ENCODE measurements at regions of chr4 and their contacts with region 1.

Region 1: DNA sequence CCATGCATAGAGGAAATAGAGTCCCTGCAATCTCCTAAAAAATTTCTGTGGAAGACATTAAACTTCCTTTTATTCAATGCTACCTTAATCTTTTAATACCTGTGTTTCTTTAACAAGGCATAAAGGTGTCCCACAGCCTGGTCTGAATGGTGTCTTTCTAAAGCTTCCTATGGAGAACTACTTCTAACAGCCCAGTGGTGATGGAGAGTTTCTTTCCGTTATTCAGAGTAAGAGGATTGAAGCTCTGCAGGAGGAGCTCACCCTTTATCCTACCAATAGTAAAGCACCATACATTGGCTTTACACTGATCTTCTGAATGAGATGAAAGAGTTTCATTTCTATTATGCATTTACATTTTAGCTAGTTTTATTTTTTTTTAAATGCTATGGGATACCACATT is 1362.4 kb upstream of the ADGRL3 start:
- DNase-seq: no peak
- ATAC-seq: no peak
- H3K4me3 ChIP-seq: no peak overlapping the region
- H3K4me3 Mint-ChIP-seq: no peak overlapping the region
- H3K27ac ChIP-seq: no peak overlapping the region
- H3K27ac Mint-ChIP-seq: no peak overlapping the region
- H3K4me1 ChIP-seq: no peaks in the 10 kb centered on the region
- H3K4me1 Mint-ChIP-seq: no peaks in the 10 kb centered on the region
- H3K27me3 ChIP-seq: no peaks in the 10 kb centered on the region
- H3K27me3 Mint-ChIP-seq: no peaks in the 10 kb centered on the region
- CTCF ChIP-seq: no peak

Region 2: GRCh38 chr4:59484944-59485343 is 352.8 kb before region 1 on chr4:
- CTCF ChIA-PET with region 1: no interaction called
- POLR2A ChIA-PET with region 1: no interaction called
- intact Hi-C with region 1: no loop called
- DNase-seq: no peak
- ATAC-seq: no peak
- H3K4me3 ChIP-seq: no peak overlapping the region
- H3K4me3 Mint-ChIP-seq: no peak overlapping the region
- H3K27ac ChIP-seq: no peak overlapping the region
- H3K27ac Mint-ChIP-seq: no peak overlapping the region
- H3K4me1 ChIP-seq: no peaks in the 10 kb centered on the region
- H3K4me1 Mint-ChIP-seq: no peaks in the 10 kb centered on the region
- H3K27me3 ChIP-seq: no peaks in the 10 kb centered on the region
- H3K27me3 Mint-ChIP-seq: no peaks in the 10 kb centered on the region
- CTCF ChIP-seq: no peak

Region 3: DNA sequence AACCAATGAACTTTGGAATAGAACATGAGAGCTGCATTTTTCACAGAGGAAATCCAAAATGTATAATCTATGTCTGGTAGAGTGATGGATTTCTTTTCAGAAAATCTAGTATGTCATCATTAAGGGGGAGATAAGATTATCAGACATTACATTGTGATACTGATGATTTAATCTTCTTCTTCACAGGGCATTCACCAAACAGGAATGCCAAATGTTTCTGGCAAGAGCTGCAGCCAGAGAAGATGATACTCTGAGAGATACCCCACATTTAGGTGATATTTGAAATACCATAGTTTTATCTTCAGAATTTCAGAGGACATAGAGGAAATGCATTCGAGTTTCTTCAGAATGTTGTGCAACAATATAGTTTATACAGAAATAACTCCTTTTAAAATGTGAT is 161.4 kb before region 1 on chr4:
- CTCF ChIA-PET with region 1: no interaction called
- POLR2A ChIA-PET with region 1: no interaction called
- intact Hi-C with region 1: no loop called
- DNase-seq: no peak
- ATAC-seq: no peak
- H3K4me3 ChIP-seq: no peak overlapping the region
- H3K4me3 Mint-ChIP-seq: no peak overlapping the region
- H3K27ac ChIP-seq: no peak overlapping the region
- H3K27ac Mint-ChIP-seq: no peak overlapping the region
- H3K4me1 ChIP-seq: no peaks in the 10 kb centered on the region
- H3K4me1 Mint-ChIP-seq: no peaks in the 10 kb centered on the region
- H3K27me3 ChIP-seq: no peaks in the 10 kb centered on the region
- H3K27me3 Mint-ChIP-seq: no peaks in the 10 kb centered on the region
- CTCF ChIP-seq: no peak

Region 4: DNA sequence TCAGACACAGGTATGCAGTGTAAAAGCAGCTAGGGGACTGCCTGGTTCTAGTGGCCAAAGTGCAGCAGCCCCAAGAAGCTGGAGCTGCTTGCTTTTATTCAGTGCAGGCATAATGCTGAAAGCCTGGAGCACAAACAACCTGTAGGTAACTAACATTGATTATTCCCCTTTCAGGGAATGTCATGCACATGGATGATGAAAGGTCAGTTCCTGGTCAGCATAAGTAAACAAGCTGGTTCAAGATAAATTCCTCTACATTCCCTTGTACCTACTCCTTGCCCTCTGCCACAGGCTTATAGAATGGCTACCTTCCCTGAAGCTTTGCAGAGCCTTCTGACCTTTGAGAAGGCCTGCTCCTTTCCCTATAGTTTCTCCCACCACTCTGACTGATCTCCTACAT is 43.9 kb after region 1 on chr4:
- CTCF ChIA-PET with region 1: no interaction called
- POLR2A ChIA-PET with region 1: no interaction called
- intact Hi-C with region 1: loop called in 1 of 2 experiments (anchors 5 kb)
- DNase-seq: no peak
- ATAC-seq: no peak
- H3K4me3 ChIP-seq: no peak overlapping the region
- H3K4me3 Mint-ChIP-seq: no peak overlapping the region
- H3K27ac ChIP-seq: no peak overlapping the region
- H3K27ac Mint-ChIP-seq: no peak overlapping the region
- H3K4me1 ChIP-seq: no peaks in the 10 kb centered on the region
- H3K4me1 Mint-ChIP-seq: no peaks in the 10 kb centered on the region
- H3K27me3 ChIP-seq: no peaks in the 10 kb centered on the region
- H3K27me3 Mint-ChIP-seq: no peaks in the 10 kb centered on the region
- CTCF ChIP-seq: no peak

Region 5: DNA sequence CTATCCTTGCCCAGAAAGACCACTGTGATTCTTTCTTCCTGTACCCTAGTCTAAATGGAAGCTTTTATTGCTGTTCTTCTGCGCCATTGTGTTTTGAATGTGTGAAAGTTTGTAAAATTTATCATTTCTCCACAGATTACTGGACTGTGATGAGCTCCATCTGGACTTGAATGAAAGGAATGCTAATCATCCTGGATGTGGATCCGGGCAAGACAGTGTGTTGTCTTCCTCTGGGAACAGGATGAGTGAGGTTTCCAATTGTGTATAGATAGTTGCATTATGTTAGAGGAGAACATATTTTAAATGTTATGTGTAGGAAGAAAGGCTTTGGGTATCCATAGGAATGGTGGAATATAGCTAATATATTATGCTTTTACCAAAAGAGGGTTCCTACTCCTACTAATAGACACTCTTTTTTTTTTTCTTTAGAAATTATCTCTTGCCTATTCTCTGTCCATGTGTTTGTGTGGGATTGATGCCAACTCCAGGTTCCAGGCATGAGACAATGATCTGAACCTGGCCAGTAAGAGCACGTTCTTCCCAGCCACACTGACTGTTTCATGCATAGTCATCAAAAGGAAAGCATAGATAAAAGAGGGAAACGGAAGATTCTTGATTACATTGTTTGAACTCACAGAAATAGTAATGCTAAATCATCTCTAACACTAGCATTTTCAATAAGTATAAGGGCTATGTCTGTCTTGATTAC is 558.8 kb after region 1 on chr4:
- CTCF ChIA-PET with region 1: no interaction called
- POLR2A ChIA-PET with region 1: no interaction called
- intact Hi-C with region 1: no loop called
- DNase-seq: no peak
- ATAC-seq: no peak
- H3K4me3 ChIP-seq: no peak overlapping the region
- H3K4me3 Mint-ChIP-seq: no peak overlapping the region
- H3K27ac ChIP-seq: no peak overlapping the region
- H3K27ac Mint-ChIP-seq: no peak overlapping the region
- H3K4me1 ChIP-seq: no peaks in the 10 kb centered on the region
- H3K4me1 Mint-ChIP-seq: no peaks in the 10 kb centered on the region
- H3K27me3 ChIP-seq: no peaks in the 10 kb centered on the region
- H3K27me3 Mint-ChIP-seq: no peaks in the 10 kb centered on the region
- CTCF ChIP-seq: no peak